IMR-90 (cell line): ENCODE measurements at regions of chr12 and their contacts with region 1.

Region 1: GRCh38 chr12:11171145-11171968 is at the start of gene SMIM10L1:
- DNase-seq: peak; percentile 94
- ATAC-seq: peak; percentile 99
- H3K4me3 ChIP-seq: peak within 1 kb of the TSS; percentile 96
- H3K27ac ChIP-seq: peak within 1 kb of the TSS; percentile 98
- H3K4me1 ChIP-seq: no peaks in the 10 kb centered on the region
- H3K27me3 ChIP-seq: no peaks in the 10 kb centered on the region
- CTCF ChIP-seq: 0 out of 2 replicates have a peak, but pooled peaks have one; percentile 4
- POLR2A ChIP-seq: peak; percentile 82
- RAD21 ChIP-seq: no peak
- total RNA-seq, gene SMIM10L1: 2.7 and 4.7 TPM in 2 replicates

Region 2: DNA sequence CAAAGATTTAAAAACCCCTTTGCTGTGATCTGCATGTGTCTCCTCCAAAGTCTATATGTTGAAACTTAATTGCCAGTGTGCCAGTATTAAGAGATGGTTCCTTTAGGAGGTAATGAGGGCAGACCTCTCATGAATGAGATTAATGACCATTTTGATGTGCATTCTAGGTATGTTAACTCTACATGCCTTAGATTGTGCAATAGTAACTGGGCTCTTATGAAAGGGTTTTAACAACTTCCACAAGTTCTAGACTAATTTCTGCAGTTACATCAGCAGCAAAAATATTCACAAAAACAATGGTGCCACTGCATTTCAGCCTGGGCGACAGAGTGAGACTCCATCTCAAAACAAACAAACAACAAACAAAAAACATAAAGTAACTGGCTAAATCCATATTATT is 341.4 kb before region 1 on chr12:
- CTCF ChIA-PET with region 1: no interaction called
- POLR2A ChIA-PET with region 1: no interaction called
- dilution Hi-C with region 1: no loop called
- in situ Hi-C with region 1: no loop called
- intact Hi-C with region 1: loop called (anchors 10 kb)
- DNase-seq: no peak
- ATAC-seq: no peak
- H3K4me3 ChIP-seq: no peak overlapping the region
- H3K27ac ChIP-seq: no peak overlapping the region
- H3K4me1 ChIP-seq: no peaks in the 10 kb centered on the region
- H3K27me3 ChIP-seq: no peaks in the 10 kb centered on the region
- CTCF ChIP-seq: no peak
- POLR2A ChIP-seq: no peak
- RAD21 ChIP-seq: no peak

Region 3: DNA sequence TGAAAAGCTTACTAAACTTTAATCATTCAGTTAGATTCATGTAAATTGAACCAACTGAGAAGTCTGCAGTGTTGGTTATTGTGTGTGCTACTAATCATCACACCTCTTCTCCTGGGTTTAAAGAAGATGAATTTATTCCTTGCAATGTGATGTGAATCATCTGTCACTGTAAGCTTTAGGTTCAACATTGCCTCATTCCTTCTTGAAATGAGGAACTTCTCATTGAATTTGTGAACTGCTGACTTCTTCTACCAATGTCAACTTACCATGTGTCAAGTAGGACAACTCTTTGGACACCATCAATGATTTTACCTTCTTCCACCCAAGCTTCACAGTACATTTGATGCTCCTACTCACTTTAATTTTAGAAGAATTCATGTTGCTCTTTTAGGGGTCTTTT is 241.4 kb after region 1 on chr12:
- CTCF ChIA-PET with region 1: no interaction called
- POLR2A ChIA-PET with region 1: no interaction called
- dilution Hi-C with region 1: no loop called
- in situ Hi-C with region 1: no loop called
- intact Hi-C with region 1: no loop called
- DNase-seq: no peak
- ATAC-seq: no peak
- H3K4me3 ChIP-seq: no peak overlapping the region
- H3K27ac ChIP-seq: no peak overlapping the region
- H3K4me1 ChIP-seq: no peaks in the 10 kb centered on the region
- H3K27me3 ChIP-seq: no peaks in the 10 kb centered on the region
- CTCF ChIP-seq: no peak
- POLR2A ChIP-seq: no peak
- RAD21 ChIP-seq: no peak